Calu3 (cell line): ENCODE measurements at regions of chr2 and their contacts with region 1.

Region 1: DNA sequence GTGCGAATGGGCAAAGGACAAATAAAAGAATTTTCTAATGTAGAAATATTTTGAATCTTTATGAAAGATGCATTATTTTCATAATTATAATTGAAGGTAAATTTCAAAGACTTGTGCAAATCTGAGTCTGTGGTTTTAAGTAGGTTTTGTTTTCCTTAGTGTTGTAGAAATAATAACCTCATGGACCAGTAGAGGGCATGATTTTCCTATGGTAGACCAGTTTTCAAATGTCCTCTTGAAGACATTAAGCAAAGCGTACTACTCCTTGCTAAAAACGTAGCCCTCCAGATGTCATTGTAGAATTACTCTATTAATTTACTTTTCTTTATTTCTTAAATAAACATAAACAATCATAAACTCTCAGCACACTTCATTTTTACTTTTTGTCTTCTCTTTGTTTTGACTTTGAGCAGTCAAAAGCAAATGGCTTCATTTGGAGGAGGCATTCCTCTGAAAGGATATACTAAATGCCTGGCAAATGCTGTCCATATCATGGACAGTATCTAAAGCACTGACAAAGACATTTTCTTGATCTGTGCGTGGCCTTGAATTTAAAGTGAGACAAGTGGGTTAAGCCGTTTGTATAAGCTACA is 85.8 kb upstream of the FAM237A start:
- DNase-seq: no peak
- H3K4me3 Mint-ChIP-seq: no peak overlapping the region
- H3K27ac Mint-ChIP-seq: no peak overlapping the region
- H3K4me1 Mint-ChIP-seq: peaks cover 20% of the 10 kb centered on the region
- H3K27me3 Mint-ChIP-seq: no peaks in the 10 kb centered on the region
- CTCF ChIP-seq: peak; percentile 54

Region 2: DNA sequence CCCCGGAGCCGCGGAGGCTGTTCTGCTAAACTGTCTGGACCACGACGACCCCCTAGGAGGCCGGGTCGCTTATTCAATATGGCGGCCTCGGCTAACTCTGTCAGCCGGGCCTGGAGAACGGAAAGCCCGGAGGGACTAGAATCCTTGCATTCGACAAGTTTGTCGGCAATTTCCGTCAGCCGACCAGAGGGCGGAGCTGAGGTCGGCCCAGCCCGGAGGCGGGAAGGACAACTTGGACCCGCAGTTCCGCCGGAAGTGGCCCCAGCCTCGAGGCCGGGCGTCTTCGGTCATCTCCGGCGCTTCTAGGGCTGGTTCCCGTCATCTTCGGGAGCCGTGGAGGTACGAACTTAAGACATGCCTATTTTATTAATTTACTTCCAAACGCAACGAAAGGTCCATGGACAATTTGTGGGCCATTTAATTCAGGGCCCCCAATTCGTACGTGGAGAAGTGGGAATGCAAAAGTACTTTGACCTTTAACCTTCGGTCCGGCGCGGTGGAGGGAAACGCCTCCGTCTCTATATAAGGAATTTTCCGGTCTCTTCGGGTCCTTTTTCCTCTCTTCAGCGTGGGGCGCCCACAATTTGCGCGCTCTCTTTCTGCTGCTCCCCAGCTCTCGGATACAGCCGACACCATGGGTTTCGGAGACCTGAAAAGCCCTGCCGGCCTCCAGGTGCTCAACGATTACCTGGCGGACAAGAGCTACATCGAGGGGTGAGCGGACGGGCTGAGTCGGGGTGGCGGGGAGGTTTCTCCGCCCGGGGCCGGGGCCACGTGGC is 396.9 kb before region 1 on chr2 and contains the starts of genes EEF1B2 and NDUFS1:
- CTCF ChIA-PET with region 1: no interaction called
- intact Hi-C with region 1: loop called (anchors 10 kb)
- DNase-seq: peak; percentile 97
- H3K4me3 Mint-ChIP-seq: peak within 1 kb of the TSS; percentile 78
- H3K27ac Mint-ChIP-seq: peak within 1 kb of the TSS; percentile 97
- H3K4me1 Mint-ChIP-seq: peaks cover 20% of the 10 kb centered on the region
- H3K27me3 Mint-ChIP-seq: no peaks in the 10 kb centered on the region
- CTCF ChIP-seq: no peak
- total RNA-seq, gene EEF1B2: 340 and 415 TPM in 2 replicates
- total RNA-seq, gene NDUFS1: 79.2 and 81.0 TPM in 2 replicates

Region 3: GRCh38 chr2:206392118-206392517 is 164.3 kb before region 1 on chr2:
- CTCF ChIA-PET with region 1: interaction called, 4 read pairs
- intact Hi-C with region 1: loop called (anchors 1 kb)
- DNase-seq: peak; percentile 54
- H3K4me3 Mint-ChIP-seq: no peak overlapping the region
- H3K27ac Mint-ChIP-seq: no peak overlapping the region
- H3K4me1 Mint-ChIP-seq: no peaks in the 10 kb centered on the region
- H3K27me3 Mint-ChIP-seq: no peaks in the 10 kb centered on the region
- CTCF ChIP-seq: peak; percentile 55

Region 4: GRCh38 chr2:206457188-206457634 is 99.2 kb before region 1 on chr2:
- CTCF ChIA-PET with region 1: no interaction called
- intact Hi-C with region 1: loop called (anchors 5 kb)
- DNase-seq: peak; percentile 28
- H3K4me3 Mint-ChIP-seq: no peak overlapping the region
- H3K27ac Mint-ChIP-seq: peak overlapping the region; percentile 16
- H3K4me1 Mint-ChIP-seq: peaks cover 32% of the 10 kb centered on the region
- H3K27me3 Mint-ChIP-seq: no peaks in the 10 kb centered on the region
- CTCF ChIP-seq: no peak

Region 5: DNA sequence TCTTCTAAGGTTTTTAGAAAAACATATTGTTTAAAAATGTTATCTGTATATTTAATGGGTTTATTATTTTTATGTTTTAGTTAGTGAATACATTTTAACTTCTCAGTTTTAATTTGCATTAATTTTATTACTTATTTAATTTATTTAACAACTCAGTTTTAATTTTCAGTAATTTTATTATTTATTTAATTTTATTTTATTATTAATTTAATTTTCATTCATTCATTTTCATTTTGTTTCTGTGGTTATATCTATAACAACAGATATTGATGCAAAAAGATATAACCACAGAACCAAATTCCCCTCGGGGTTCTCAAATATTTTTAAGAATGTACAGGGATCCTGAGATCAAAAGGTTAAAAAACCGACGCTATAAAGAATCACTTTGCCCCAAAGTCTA is 108.8 kb after region 1 on chr2:
- CTCF ChIA-PET with region 1: no interaction called
- intact Hi-C with region 1: loop called (anchors 5 kb)
- DNase-seq: no peak
- H3K4me3 Mint-ChIP-seq: no peak overlapping the region
- H3K27ac Mint-ChIP-seq: no peak overlapping the region
- H3K4me1 Mint-ChIP-seq: no peaks in the 10 kb centered on the region
- H3K27me3 Mint-ChIP-seq: peaks cover 14% of the 10 kb centered on the region
- CTCF ChIP-seq: no peak

Region 6: DNA sequence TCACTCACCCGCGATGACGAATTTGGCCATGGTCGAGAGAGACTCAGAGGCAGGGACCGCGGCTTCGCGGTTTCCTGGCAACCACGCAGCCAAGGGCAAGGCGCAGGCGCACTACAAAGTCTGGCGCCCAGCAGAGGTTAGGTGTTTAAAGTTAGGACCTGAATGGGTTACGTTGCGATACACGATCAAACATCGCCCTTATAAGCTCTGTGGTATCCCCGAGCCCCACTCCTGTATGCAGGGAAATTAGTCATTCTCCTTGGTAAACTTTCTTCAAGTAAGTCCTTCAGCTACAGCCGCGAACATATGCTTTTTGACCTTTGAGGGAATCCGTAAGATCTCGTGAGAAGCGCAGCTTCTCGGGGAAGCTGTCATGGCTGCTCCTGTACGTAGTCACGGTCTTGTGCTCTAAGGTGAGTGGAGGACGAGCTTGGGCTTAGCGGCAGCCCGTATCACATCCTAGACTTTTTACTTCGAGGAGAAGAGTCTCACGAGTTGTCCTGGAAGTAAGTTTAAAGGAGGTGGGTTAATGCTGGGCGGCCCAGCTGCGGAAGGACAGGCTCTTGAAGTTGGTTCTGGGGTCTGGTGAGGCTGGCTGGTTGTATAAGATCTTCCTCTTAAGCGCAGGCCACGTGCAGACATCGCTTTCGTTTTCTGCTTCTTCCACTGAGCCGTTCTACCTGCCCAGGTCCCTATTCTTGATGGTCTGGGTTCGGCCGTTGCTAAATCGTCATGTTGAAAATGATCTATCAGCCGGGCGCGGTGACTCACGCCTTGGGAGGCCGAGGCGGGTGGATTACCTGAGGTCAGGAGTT is 209.0 kb after region 1 on chr2 and contains the starts of genes FASTKD2 and MDH1B:
- CTCF ChIA-PET with region 1: no interaction called
- intact Hi-C with region 1: loop called (anchors 5 kb)
- DNase-seq: peak; percentile 79
- H3K4me3 Mint-ChIP-seq: peak within 1 kb of the TSS; percentile 77
- H3K27ac Mint-ChIP-seq: peak within 1 kb of the TSS; percentile 94
- H3K4me1 Mint-ChIP-seq: peaks cover 22% of the 10 kb centered on the region
- H3K27me3 Mint-ChIP-seq: no peaks in the 10 kb centered on the region
- CTCF ChIP-seq: no peak
- total RNA-seq, gene FASTKD2: 31.5 and 31.9 TPM in 2 replicates
- total RNA-seq, gene MDH1B: 0.94 and 1.9 TPM in 2 replicates

Region 7: DNA sequence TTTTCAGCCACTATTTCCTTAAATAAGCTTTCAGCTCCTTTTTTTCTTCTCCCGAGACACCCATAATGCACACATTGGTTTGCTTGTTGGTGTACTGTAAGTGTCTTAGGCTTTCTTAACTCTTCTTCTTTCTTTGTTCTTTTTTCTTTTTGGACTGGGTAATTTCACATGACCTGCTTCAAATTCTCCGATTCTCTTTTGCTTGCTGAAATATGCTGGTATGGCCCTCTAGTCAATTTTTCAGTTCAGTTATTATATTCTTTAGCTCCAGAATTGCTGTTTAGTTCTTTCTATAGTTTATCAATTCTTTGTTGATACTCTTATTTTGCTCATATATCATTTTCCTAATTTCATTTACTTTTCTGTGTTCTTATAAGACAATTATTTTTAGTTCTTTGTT is 224.2 kb after region 1 on chr2:
- CTCF ChIA-PET with region 1: no interaction called
- intact Hi-C with region 1: loop called (anchors 1 kb)
- DNase-seq: no peak
- H3K4me3 Mint-ChIP-seq: no peak overlapping the region
- H3K27ac Mint-ChIP-seq: no peak overlapping the region
- H3K4me1 Mint-ChIP-seq: no peaks in the 10 kb centered on the region
- H3K27me3 Mint-ChIP-seq: no peaks in the 10 kb centered on the region
- CTCF ChIP-seq: no peak